ENCODE measurements at regions of chr19 and their contacts with region 1.

Region 1: DNA sequence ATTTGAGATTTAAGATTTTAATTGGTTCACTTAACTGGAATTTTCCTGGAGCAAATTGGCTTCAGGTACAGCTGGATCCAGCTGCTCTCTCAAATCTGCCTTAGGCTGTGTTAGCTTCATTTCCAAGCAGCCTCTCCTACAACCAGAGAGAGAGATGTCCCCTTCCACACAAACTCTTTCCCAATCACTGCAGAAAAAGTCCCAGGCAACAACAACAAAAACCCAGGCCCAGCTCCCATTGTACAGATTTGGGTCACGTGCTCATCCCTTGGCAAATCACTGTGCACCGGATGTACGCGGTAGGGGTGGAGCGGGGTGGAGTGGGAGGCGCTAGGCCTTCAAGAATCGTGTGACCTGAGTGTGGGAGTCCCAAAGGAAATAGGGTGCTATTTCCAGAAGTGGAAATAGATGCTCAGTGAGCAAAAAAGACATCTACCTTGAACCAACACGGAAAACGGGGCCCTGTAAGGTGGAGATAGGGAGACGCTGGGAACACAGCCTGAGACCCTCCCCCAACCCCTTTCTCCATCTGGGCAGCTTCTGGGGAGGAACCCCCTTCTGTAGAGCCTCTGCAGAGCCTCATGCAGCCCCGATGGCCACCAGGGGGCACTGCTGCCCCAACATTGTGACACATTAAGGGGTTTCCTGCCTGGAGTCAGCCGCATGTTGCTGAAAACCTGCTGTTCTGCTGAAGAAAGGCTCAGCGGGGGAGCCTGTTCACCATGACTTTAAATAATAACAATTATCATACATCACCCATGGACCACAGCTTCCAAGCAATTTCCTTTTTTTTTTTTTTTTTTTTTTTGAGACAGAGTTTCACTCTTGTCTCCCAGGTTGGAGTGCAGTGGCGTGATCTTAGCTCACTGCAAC is 25.4 kb downstream of the HPN start:
- DNase-seq: peak; percentile 92
- ATAC-seq: peak; percentile 87
- H3K4me3 ChIP-seq: no peak overlapping the region
- H3K4me3 Mint-ChIP-seq: peak overlapping the region; percentile 39
- H3K27ac ChIP-seq: no peak overlapping the region
- H3K27ac Mint-ChIP-seq: peak overlapping the region; percentile 65
- H3K4me1 ChIP-seq: peaks cover 13 to 29% of the 10 kb centered on the region in 2 donors
- H3K4me1 Mint-ChIP-seq: peaks cover 29% of the 10 kb centered on the region
- H3K27me3 ChIP-seq: no peaks in the 10 kb centered on the region
- H3K27me3 Mint-ChIP-seq: no peaks in the 10 kb centered on the region
- CTCF ChIP-seq: peak; percentile 92

Region 2: GRCh38 chr19:34667349-34668076 is 399.4 kb before region 1 on chr19:
- CTCF ChIA-PET with region 1: no interaction called
- POLR2A ChIA-PET with region 1: no interaction called
- intact Hi-C with region 1: no loop called
- DNase-seq: no peak
- ATAC-seq: no peak
- H3K4me3 ChIP-seq: no peak overlapping the region
- H3K4me3 Mint-ChIP-seq: no peak overlapping the region
- H3K27ac ChIP-seq: no peak overlapping the region
- H3K27ac Mint-ChIP-seq: no peak overlapping the region
- H3K4me1 ChIP-seq: peaks cover 0 to 5% of the 10 kb centered on the region in 2 donors
- H3K4me1 Mint-ChIP-seq: peaks cover 9% of the 10 kb centered on the region
- H3K27me3 ChIP-seq: no peaks in the 10 kb centered on the region
- H3K27me3 Mint-ChIP-seq: no peaks in the 10 kb centered on the region
- CTCF ChIP-seq: no peak

Region 3: GRCh38 chr19:35083691-35084508 is 17.0 kb after region 1 on chr19:
- CTCF ChIA-PET with region 1: interaction called, 192 read pairs
- POLR2A ChIA-PET with region 1: interaction called, 7 read pairs
- intact Hi-C with region 1: loop called (anchors 1 kb)
- DNase-seq: peak; percentile 54
- ATAC-seq: peak; percentile 66
- H3K4me3 ChIP-seq: peak overlapping the region in 1 of 5 experiments; percentile 4
- H3K4me3 Mint-ChIP-seq: peak overlapping the region; percentile 79
- H3K27ac ChIP-seq: peak overlapping the region; percentile 90 to 92
- H3K27ac Mint-ChIP-seq: peak overlapping the region; percentile 90
- H3K4me1 ChIP-seq: peaks cover 75 to 82% of the 10 kb centered on the region in 2 donors
- H3K4me1 Mint-ChIP-seq: peaks cover 77% of the 10 kb centered on the region
- H3K27me3 ChIP-seq: no peaks in the 10 kb centered on the region
- H3K27me3 Mint-ChIP-seq: no peaks in the 10 kb centered on the region
- CTCF ChIP-seq: no peak

Region 4: DNA sequence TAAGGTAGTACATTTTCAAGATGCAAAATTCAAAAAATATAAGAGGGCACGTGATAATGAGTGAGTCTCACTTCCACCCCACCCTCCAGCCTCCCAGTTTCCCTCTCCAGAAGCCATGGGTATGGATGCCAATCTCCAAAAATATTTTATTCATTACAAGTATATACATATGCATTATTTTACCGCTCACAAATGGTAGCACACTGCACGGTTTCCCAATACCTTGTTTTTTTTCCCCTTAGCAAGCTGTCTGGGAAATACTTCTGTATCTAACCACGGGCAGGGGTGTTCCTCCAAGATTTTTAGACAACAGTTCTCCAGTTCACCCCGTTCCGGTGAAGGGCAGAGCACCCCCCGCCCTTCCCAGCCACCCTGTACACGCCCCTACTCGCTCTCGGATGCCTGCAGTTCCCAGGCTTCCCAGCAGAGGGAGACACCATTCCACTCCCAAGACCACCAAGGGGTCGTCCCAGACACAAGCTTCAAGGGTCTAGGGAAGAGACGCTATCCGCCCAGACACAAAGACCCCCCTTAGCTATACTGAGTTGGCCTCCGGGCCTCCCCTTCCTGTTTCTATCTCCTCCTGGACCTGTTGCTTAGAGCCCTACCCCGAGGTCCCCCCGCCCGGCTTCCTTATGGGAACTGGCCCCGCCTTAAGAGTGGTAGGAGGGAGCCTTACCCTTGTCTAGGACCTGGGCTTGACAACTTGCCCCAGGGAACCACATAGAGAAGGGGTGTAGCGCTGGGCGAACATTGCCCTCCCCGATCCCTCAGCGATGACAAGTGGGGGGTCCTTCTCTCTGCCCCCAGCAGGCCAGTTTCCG is 47.6 kb after region 1 on chr19:
- CTCF ChIA-PET with region 1: interaction called, 29 read pairs
- POLR2A ChIA-PET with region 1: no interaction called
- intact Hi-C with region 1: loop called (anchors 1 kb)
- DNase-seq: peak; percentile 80
- ATAC-seq: peak; percentile 92
- H3K4me3 ChIP-seq: peak overlapping the region in 1 of 5 experiments; percentile 24
- H3K4me3 Mint-ChIP-seq: peak overlapping the region; percentile 44
- H3K27ac ChIP-seq: no peak overlapping the region
- H3K27ac Mint-ChIP-seq: peak overlapping the region; percentile 46
- H3K4me1 ChIP-seq: peaks cover 7 to 9% of the 10 kb centered on the region in 2 donors
- H3K4me1 Mint-ChIP-seq: peaks cover 8% of the 10 kb centered on the region
- H3K27me3 ChIP-seq: peaks cover 0 to 26% (median 2%) of the 10 kb centered on the region in 4 experiments
- H3K27me3 Mint-ChIP-seq: peaks cover 7% of the 10 kb centered on the region
- CTCF ChIP-seq: peak; percentile 91

Region 5: GRCh38 chr19:35135389-35135909 is 68.5 kb after region 1 on chr19:
- CTCF ChIA-PET with region 1: interaction called, 65 read pairs
- POLR2A ChIA-PET with region 1: no interaction called
- intact Hi-C with region 1: loop called (anchors 1 kb)
- DNase-seq: peak; percentile 79
- ATAC-seq: peak; percentile 93
- H3K4me3 ChIP-seq: no peak overlapping the region
- H3K4me3 Mint-ChIP-seq: no peak overlapping the region
- H3K27ac ChIP-seq: no peak overlapping the region
- H3K27ac Mint-ChIP-seq: peak overlapping the region; percentile 75
- H3K4me1 ChIP-seq: peaks cover 0 to 28% of the 10 kb centered on the region in 2 donors
- H3K4me1 Mint-ChIP-seq: peaks cover 21% of the 10 kb centered on the region
- H3K27me3 ChIP-seq: peaks cover 0 to 2% (median 0%) of the 10 kb centered on the region in 4 experiments
- H3K27me3 Mint-ChIP-seq: peaks cover 5% of the 10 kb centered on the region
- CTCF ChIP-seq: peak; percentile 82

Region 6: DNA sequence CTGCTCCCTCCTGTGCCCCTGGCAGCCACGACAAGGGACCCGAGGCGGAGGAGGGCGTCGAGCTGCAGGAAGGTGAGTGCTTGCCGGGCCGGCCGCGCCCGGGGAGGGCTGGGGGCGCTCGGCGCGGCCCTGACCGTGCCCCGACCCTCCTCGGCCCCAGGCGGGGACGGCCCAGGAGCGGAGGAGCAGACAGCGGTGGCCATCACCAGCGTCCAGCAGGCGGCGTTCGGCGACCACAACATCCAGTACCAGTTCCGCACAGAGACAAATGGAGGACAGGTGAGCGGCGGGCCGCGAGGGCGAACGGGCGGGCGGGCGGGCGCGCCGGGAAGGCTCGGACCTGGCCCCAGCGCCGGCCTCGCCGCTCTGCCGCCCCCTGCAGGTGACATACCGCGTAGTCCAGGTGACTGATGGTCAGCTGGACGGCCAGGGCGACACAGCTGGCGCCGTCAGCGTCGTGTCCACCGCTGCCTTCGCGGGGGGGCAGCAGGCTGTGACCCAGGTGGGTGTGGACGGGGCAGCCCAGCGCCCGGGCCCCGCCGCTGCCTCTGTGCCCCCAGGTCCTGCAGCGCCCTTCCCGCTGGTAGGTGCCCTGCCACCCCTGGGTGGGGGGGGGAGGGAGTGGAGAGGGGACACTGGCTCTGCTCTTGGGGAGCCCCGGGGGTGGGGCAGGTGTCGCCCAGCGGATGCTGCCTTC is 202.6 kb after region 1 on chr19:
- CTCF ChIA-PET with region 1: interaction called, 3 read pairs
- POLR2A ChIA-PET with region 1: no interaction called
- intact Hi-C with region 1: loop called (anchors 5 kb)
- DNase-seq: peak; percentile 92
- ATAC-seq: peak; percentile 71
- H3K4me3 ChIP-seq: peak overlapping the region in 4 of 5 experiments; percentile 24 to 62 (median 54)
- H3K4me3 Mint-ChIP-seq: peak overlapping the region; percentile 84
- H3K27ac ChIP-seq: no peak overlapping the region
- H3K27ac Mint-ChIP-seq: peak overlapping the region; percentile 87
- H3K4me1 ChIP-seq: peaks cover 39 to 57% of the 10 kb centered on the region in 2 donors
- H3K4me1 Mint-ChIP-seq: peaks cover 62% of the 10 kb centered on the region
- H3K27me3 ChIP-seq: no peaks in the 10 kb centered on the region
- H3K27me3 Mint-ChIP-seq: no peaks in the 10 kb centered on the region
- CTCF ChIP-seq: peak; percentile 77

Region 7: DNA sequence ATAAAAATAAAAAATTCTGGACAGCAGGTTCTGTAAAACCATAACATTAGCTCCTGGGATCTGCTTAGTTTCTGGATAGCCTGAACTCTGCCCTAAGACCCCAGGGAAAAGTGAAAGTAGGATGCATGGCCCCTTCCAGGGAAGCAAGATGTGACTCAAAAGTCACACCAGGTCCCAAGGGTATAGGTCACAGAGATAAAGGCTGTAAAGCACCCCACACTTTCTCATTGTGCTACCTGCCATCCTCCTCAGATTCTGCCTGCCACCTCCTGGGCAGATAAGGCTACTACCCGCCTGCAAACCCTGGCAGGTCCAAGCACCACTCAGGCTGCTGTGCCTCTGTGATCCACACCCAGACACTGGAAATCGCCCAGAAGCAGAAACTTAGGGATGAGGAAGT is 401.7 kb after region 1 on chr19:
- CTCF ChIA-PET with region 1: interaction called, 4 read pairs
- POLR2A ChIA-PET with region 1: no interaction called
- intact Hi-C with region 1: loop called (anchors 1 kb)
- DNase-seq: peak; percentile 84
- ATAC-seq: peak; percentile 100
- H3K4me3 ChIP-seq: no peak overlapping the region
- H3K4me3 Mint-ChIP-seq: no peak overlapping the region
- H3K27ac ChIP-seq: no peak overlapping the region
- H3K27ac Mint-ChIP-seq: peak overlapping the region; percentile 23
- H3K4me1 ChIP-seq: peaks cover 2 to 12% of the 10 kb centered on the region in 2 donors
- H3K4me1 Mint-ChIP-seq: peaks cover 10% of the 10 kb centered on the region
- H3K27me3 ChIP-seq: no peaks in the 10 kb centered on the region
- H3K27me3 Mint-ChIP-seq: no peaks in the 10 kb centered on the region
- CTCF ChIP-seq: peak; percentile 84